Activated naive CD4-positive, alpha-beta T cell treated with anti-CD3 and anti-CD28 coated beads for 36 hours (primary cell): ENCODE measurements at regions of chr11 and their contacts with region 1.

Region 1: GRCh38 chr11:7422544-7423331 is 62.6 kb upstream of the OLFML1 start:
- DNase-seq: peak; percentile 19
- H3K4me3 Mint-ChIP-seq: no peak overlapping the region
- H3K27ac Mint-ChIP-seq: no peak overlapping the region
- H3K4me1 Mint-ChIP-seq: peaks cover 13% of the 10 kb centered on the region
- H3K27me3 Mint-ChIP-seq: no peaks in the 10 kb centered on the region

Region 2: DNA sequence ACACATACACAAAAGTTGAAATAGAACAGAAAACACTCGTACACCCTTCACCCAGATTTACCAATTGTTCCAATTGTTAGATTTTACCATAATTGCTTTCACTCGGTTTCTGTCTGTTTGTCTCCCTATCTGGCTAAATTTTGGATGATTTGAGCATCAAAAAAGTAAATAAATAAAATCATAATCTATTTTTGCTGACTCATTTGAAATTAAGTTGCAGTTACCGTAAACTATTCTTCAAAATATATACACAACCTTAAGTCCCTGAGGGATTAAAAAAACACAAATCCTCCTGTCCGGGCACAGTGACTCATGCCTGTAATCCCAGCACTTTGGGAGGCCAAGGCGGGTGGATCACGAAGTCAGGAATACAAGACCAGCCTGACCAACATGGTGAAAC is 252.3 kb before region 1 on chr11:
- CTCF ChIA-PET with region 1: no interaction called
- intact Hi-C with region 1: no loop called
- DNase-seq: no peak
- H3K4me3 Mint-ChIP-seq: no peak overlapping the region
- H3K27ac Mint-ChIP-seq: no peak overlapping the region
- H3K4me1 Mint-ChIP-seq: no peaks in the 10 kb centered on the region
- H3K27me3 Mint-ChIP-seq: peaks cover 1% of the 10 kb centered on the region

Region 3: GRCh38 chr11:7436657-7437056 is 13.9 kb after region 1 on chr11:
- CTCF ChIA-PET with region 1: interaction called, 4 read pairs
- intact Hi-C with region 1: loop called (anchors 2 kb)
- DNase-seq: peak; percentile 49
- H3K4me3 Mint-ChIP-seq: no peak overlapping the region
- H3K27ac Mint-ChIP-seq: no peak overlapping the region
- H3K4me1 Mint-ChIP-seq: peaks cover 11% of the 10 kb centered on the region
- H3K27me3 Mint-ChIP-seq: no peaks in the 10 kb centered on the region